ENCODE measurements at regions of chr3 and their contacts with region 1.

Region 1: GRCh38 chr3:30524357-30525040 is 81.9 kb upstream of the TGFBR2 start:
- DNase-seq: no peak
- H3K4me3 ChIP-seq: no peak overlapping the region
- CTCF ChIP-seq: no peak

Region 2: GRCh38 chr3:30455840-30456239 is 68.7 kb before region 1 on chr3:
- in situ Hi-C with region 1: loop called (anchors 5 kb)
- DNase-seq: no peak
- H3K4me3 ChIP-seq: no peak overlapping the region
- CTCF ChIP-seq: no peak

Region 3: DNA sequence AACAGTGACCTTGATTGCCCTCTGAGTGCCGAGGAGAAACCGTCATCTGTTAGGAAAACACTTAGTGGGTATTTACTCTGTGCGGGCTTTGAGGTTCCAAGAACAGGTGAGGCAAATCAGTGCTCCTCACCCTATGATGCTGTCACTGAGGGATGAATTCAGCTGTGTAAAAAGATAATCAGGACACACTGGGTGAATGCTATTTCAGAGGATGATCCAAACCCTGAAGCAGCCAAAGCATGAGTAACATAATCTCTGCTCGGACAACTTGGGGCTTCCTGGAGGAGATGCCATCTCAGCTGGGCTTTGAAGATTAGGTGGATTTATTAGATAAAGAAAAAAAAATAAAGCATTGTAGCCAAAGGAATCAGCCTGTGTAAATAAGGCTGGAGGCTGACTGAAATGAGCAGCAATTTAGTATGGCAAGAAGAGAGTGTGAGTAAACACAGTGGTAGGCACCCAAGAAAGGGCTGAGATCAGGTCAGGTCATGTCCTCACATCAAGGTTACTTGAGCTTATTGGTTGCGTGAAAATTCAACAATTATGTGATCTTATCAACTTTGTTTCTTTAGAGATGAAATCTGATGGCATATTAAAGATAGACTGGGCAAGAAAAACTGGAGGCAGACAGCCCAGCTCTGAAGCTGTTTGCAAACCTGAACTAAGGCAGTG is 380.6 kb after region 1 on chr3:
- in situ Hi-C with region 1: no loop called
- DNase-seq: no peak
- H3K4me3 ChIP-seq: no peak overlapping the region
- CTCF ChIP-seq: no peak